A549 (cell line): ENCODE measurements at regions of chr12 and their contacts with region 1.

Region 1: DNA sequence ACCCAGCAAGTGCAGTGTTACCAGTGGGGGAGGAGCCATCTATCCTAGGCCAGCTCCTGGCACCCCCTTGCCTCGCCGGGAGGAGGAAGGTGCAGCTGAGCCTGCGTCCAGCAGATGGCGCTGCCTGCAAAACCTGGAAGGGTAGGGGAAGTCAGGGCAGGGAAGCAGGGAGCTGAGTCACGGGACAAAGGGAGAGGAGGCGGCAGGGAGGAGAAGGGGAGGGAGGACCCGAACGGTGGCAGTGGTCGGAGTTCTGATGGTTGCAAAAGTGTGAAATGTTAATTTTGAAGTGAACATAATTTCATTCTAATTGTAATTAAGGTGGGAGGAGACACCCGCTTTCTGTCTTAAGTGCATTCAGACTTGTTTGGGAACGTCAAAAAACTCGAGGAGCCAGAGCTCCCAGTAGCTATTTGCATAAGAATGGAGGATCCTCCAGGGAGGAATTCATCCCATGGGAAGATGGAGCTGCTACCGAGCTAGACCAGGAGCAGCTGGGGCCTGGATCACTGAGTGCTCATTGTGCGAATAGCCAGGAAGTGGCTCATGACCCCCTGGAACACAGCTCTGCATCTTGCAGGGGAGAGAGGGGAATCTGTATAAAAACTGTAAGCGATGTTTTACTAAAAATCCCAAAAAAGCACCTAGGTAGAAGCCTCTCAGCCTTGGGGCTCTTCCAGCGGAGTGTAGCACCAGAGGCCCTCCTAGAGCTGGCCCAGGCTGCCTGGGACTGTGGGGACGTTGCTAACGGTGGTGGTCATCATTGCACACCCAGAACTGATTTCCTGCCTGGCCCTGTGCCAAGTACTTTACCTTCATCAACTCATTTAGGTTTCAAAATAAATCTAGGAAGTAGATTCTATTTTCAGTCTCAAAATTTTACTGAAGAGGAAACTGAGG is 59.5 kb downstream of the EMP1 start:
- DNase-seq: peak; percentile 95
- ATAC-seq: peak; percentile 98 to 100
- H3K4me3 ChIP-seq: peak overlapping the region; percentile 40
- H3K27ac ChIP-seq: peak overlapping the region; percentile 79 to 87
- H3K4me1 ChIP-seq: peaks cover 6% of the 10 kb centered on the region
- CTCF ChIP-seq: peak; percentile 94
- EP300 ChIP-seq: no peak
- POLR2A ChIP-seq: peak; percentile 67
- RAD21 ChIP-seq: peak; percentile 85 to 95

Region 2: DNA sequence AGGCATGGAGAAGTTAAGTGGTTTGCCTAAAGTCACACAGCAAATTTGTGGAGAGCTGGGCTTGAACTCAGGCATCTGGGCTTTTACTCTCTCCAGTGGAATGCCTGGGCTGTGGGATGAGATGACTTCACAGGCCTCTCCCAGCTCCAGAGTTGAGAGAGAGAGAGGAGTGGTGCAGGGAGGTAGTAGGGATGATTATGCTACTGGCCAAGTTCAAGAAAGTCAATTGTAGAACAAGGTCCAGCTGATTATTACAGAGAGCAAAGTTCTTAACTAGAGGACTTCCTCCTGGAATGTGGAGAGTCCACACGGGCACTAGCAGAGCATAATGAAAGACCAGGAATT is 60.3 kb before region 1 on chr12:
- CTCF ChIA-PET with region 1: no interaction called
- POLR2A ChIA-PET with region 1: no interaction called
- DNase-seq: peak in 1 of 2 experiments; percentile 63
- ATAC-seq: peak; percentile 51 to 54; a peak in 5 of 6 replicates
- H3K4me3 ChIP-seq: no peak overlapping the region; the same call in 2 of the 3 replicates
- H3K27ac ChIP-seq: peak overlapping the region; percentile 72 to 83
- H3K4me1 ChIP-seq: peaks cover 46% of the 10 kb centered on the region
- CTCF ChIP-seq: no peak
- EP300 ChIP-seq: no peak
- POLR2A ChIP-seq: no peak
- RAD21 ChIP-seq: no peak

Region 3: DNA sequence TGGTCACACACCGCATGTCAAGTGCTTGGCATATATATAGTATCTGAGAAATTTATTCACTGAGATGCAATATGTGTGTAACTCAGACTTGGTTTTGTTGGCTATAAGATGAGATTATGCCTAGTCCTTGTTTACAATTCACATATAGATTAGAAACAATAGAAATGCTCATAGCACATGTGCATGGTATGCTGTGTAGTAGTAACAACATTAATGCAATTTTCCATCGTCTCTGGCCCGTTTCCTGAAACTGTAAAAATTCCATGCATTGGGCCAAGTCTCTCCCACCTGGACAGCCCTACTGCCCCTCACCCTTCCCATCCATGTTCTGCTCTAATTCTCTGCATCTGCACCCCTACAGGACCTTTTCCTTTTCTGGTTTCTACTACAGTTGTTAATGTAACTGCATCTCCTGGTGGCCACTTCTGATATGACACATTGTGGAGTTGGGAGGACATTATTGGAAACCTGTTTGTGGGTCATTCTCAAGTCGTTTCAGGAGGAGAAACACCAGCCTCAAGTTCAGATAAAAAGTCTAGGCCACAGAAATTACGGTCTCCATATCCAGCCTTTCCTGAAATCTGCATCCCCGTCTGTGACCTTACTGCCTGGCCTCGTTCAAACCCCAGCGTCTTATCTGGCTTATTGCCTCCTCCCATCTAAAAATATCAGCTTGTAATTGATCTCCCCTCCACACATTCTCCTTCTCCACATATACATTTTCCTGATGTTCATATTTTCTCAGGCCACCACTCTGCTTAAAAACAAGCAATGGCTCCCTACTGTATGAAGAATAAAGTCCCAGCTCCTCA is 22.0 kb before region 1 on chr12:
- CTCF ChIA-PET with region 1: interaction called, 16 read pairs
- POLR2A ChIA-PET with region 1: no interaction called
- DNase-seq: peak; percentile 72 to 73
- ATAC-seq: peak; percentile 80 to 91
- H3K4me3 ChIP-seq: no peak overlapping the region
- H3K27ac ChIP-seq: 0 out of 6 replicates have a peak overlapping the region, but pooled peaks of 1 of the 2 experiments have one; percentile 8
- H3K4me1 ChIP-seq: no peaks in the 10 kb centered on the region
- CTCF ChIP-seq: peak; percentile 84
- EP300 ChIP-seq: no peak
- POLR2A ChIP-seq: no peak
- RAD21 ChIP-seq: peak; percentile 82 to 96

Region 4: DNA sequence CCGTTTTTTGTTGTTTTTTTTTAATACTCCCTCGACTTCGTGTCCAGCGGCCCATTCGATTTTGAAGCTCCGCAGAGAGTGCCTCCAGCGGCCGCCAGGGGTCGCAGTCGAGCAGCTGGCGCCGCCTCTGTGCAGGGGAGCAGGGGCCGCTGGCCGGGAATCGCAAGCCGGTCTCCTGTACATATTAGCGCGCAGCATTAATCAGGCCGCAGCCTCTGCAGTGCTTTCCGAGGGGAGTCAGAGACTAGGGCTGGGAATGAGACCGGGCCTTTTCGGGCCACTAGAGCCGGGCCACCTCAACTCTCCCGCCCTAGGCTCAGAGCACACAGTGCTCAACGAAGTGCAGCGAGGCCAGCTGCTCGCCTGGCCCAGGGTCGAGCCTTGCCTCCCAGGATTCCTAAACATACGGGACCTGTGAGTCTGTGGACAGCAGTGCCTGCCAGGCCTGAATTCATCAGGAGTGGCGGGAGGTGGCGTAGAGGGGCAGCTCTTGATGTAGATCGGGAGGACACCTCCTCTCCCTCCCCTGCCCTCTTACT is 22.3 kb after region 1 on chr12:
- CTCF ChIA-PET with region 1: interaction called, 70 read pairs
- POLR2A ChIA-PET with region 1: interaction called, 7 read pairs
- DNase-seq: peak; percentile 69 to 82
- ATAC-seq: peak; percentile 94 to 98
- H3K4me3 ChIP-seq: no peak overlapping the region
- H3K27ac ChIP-seq: peak overlapping the region; percentile 40 to 47; a peak in 3 of 6 replicates
- H3K4me1 ChIP-seq: no peaks in the 10 kb centered on the region
- CTCF ChIP-seq: peak; percentile 95
- EP300 ChIP-seq: no peak
- POLR2A ChIP-seq: no peak
- RAD21 ChIP-seq: peak; percentile 90 to 93

Region 5: DNA sequence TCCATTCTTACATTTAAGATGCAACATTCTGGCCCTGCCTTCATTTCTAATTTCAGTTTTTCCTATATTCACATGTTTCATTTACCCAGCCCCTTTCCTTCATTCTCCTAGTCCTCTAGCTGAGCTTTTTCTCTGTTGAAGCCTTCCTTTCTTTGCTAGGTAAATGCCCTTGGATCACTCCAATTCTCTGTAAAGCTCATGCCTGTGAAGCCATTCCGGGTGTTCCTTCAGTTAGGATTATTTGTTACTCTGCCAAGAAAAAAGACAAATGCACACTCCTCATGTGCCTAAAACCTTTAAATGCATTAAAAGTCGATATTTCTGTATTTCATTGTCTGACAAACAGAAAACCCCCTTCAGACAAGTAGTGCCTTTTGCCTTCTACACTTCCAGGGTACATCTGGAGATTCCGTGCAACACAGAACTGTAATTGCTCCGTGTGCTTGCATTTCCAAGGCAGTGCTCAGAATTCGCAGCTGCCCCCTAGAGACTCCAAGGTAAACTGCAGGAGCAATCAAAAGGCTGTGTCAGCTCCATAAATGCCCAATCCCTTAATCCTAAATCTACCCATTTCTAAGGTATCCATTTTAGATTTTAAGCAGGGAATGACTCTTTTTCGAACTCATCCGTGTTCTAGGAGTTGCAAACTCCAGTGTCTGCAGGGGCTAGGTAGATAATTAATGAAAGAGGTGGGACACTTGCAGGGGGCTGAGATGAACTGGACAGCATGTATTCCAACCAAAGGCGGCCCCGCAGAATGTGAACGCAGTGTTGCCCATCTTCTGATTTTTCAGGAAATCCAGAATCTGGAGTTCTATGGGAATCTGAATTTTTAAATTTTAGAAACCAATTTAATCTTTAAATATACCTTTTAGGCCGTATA is 405.2 kb after region 1 on chr12:
- CTCF ChIA-PET with region 1: interaction called, 10 read pairs
- POLR2A ChIA-PET with region 1: no interaction called
- DNase-seq: peak; percentile 36 to 61
- ATAC-seq: peak; percentile 88 to 94
- H3K4me3 ChIP-seq: no peak overlapping the region
- H3K27ac ChIP-seq: no peak overlapping the region
- H3K4me1 ChIP-seq: no peaks in the 10 kb centered on the region
- CTCF ChIP-seq: peak; percentile 72
- EP300 ChIP-seq: no peak
- POLR2A ChIP-seq: no peak
- RAD21 ChIP-seq: peak; percentile 59 to 71

Region 6: DNA sequence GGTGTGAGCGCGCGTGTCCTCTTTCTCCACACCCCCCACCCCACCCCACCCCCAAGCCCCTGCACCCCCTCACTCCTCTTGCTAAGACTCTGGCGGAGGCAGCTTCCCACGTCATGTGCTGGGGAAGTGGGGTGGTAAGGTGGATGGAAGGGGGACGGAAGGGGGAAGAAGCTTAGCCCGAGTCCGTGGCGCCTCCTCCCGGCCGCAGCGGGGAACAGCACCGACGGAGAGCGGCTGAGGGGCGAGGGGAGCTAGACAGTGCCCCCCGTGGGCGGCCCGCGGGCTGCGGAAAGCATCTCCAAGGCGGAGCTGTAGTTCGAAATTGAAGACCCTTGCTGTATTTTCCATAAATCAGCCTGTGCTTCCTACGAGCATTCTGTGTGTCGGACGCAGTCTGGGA is 725.9 kb after region 1 on chr12:
- CTCF ChIA-PET with region 1: interaction called, 5 read pairs
- POLR2A ChIA-PET with region 1: interaction called, 10 read pairs
- DNase-seq: peak; percentile 55 to 81
- ATAC-seq: peak; percentile 84 to 87
- H3K4me3 ChIP-seq: peak overlapping the region; percentile 61
- H3K27ac ChIP-seq: peak overlapping the region; percentile 76 to 89
- H3K4me1 ChIP-seq: peaks cover 16% of the 10 kb centered on the region; the same call in 2 of the 3 replicates
- CTCF ChIP-seq: peak; percentile 83
- EP300 ChIP-seq: no peak
- POLR2A ChIP-seq: no peak
- RAD21 ChIP-seq: peak; percentile 79 to 95